Adrenal gland (tissue), 19 donors: ENCODE measurements at regions of chr5 and their contacts with region 1.

Region 1: GRCh38 chr5:140267559-140268018 is 35.3 kb downstream of the PFDN1 start:
- DNase-seq: no peak
- H3K4me3 ChIP-seq: no peak overlapping the region
- H3K27ac ChIP-seq: no peak overlapping the region
- H3K4me1 ChIP-seq: peaks cover 0 to under 1% of the 10 kb centered on the region in 2 donors
- H3K27me3 ChIP-seq: no peaks in the 10 kb centered on the region
- CTCF ChIP-seq: no peak
- POLR2A ChIP-seq: no peak

Region 2: DNA sequence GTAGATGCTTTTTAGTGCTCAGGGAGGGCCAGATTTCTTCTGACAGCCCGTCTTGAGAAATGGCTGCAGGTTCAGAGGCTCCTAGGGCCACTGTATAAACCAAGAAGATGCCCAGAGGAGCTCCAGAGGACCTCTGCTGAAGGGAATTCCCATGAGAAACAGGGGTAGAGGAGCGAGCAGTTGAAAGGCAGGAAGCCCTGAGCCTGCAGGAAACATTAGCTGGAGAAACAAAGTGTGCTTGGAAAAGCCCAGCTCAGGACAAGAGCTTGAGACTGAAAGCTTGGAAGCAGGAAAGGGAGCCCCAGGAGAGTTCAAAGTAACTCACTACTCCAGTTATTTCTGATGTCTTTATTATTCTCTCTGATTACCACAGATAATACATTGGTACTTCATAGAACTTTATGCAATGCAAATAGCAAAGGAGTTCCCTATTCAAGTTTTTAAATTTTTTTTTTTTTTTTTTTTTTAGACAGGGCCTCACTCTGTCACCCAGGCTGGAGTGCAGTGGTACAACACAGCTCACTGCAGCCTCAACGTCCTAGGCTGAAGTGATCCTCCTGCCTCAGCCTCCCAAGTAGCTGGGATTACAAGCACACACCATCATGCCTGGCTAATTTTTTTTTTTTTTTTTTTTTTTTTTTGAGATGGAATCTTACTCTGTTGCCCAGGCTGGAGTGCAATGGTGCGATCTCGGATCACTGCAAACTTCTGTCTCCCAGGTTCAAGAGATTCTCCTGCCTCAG is 62.3 kb after region 1 on chr5:
- intact Hi-C with region 1: loop called in 1 of 2 experiments (anchors 5 kb)
- DNase-seq: no peak
- H3K4me3 ChIP-seq: no peak overlapping the region
- H3K27ac ChIP-seq: no peak overlapping the region
- H3K4me1 ChIP-seq: peaks cover 0 to 6% of the 10 kb centered on the region in 2 donors
- H3K27me3 ChIP-seq: no peaks in the 10 kb centered on the region
- CTCF ChIP-seq: no peak
- POLR2A ChIP-seq: no peak

Region 3: GRCh38 chr5:140401362-140402257 is 134.0 kb after region 1 on chr5 and contains the start of gene ANKHD1:
- intact Hi-C with region 1: no loop called
- DNase-seq: peak; percentile 99 to 100 (median 100)
- H3K4me3 ChIP-seq: peak within 1 kb of the TSS; percentile 72 to 98 (median 92)
- H3K27ac ChIP-seq: peak within 1 kb of the TSS; percentile 93 to 99 (median 98)
- H3K4me1 ChIP-seq: peaks cover 14 to 36% of the 10 kb centered on the region in 2 donors
- H3K27me3 ChIP-seq: no peaks in the 10 kb centered on the region
- CTCF ChIP-seq: no peak
- POLR2A ChIP-seq: peak; percentile 96 to 100
- total RNA-seq, gene ANKHD1: 64.3 to 141 (median 99.4) TPM

Region 4: DNA sequence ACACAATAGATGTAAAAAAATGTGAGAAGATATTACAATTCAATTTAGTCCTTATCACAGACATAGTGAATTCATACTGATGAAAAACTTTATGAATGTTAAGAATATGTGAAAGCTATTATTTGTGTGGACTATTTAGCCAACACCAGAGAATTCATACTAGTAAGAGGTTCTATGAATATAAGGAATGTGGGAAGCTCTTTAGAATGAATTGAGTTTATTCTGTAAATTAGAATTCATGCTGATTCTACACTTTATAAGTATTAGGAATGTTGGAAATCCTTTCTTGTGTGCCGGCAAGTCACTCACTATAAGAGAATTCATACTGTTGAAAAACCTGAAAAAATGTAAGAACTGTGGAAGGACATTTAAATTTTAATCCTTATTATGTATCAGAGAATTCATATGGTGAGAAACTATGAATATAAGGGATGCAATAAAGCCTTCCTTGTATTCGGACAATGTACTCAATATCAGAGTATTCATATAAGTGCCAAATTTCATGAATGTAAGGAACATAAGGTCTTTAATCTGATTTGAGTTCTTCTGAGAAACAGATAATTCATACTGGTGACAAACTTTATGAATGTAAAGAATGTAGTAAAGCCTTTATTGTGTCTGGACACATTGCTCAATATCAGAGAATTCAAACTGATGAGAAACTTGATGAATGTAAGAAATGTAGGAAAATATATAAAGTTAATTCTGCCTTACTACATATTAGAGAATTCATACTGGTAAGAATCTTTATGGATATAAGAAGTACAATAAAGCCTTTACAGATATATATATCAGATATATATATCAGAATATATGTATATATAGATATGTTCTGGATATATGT is 496.8 kb after region 1 on chr5:
- intact Hi-C with region 1: no loop called
- DNase-seq: no peak
- H3K4me3 ChIP-seq: no peak overlapping the region
- H3K27ac ChIP-seq: no peak overlapping the region
- H3K4me1 ChIP-seq: no peaks in the 10 kb centered on the region
- H3K27me3 ChIP-seq: no peaks in the 10 kb centered on the region
- CTCF ChIP-seq: no peak
- POLR2A ChIP-seq: no peak